Caco-2 (cell line): ENCODE measurements at regions of chr10 and their contacts with region 1.

Region 1: GRCh38 chr10:13299437-13300287 is at the start of gene PHYH:
- DNase-seq: peak; percentile 89 to 95
- H3K4me3 ChIP-seq: peak within 1 kb of the TSS; percentile 88
- H3K4me3 Mint-ChIP-seq: peak within 1 kb of the TSS; percentile 77
- H3K27ac Mint-ChIP-seq: peak within 1 kb of the TSS; percentile 100
- H3K4me1 ChIP-seq: peaks cover 14% of the 10 kb centered on the region; the same call in 1 of the 2 replicates
- H3K4me1 Mint-ChIP-seq: peaks cover 21% of the 10 kb centered on the region
- H3K27me3 ChIP-seq: no peaks in the 10 kb centered on the region
- H3K27me3 Mint-ChIP-seq: no peaks in the 10 kb centered on the region
- CTCF ChIP-seq: no peak
- total RNA-seq, gene PHYH: 49.6 and 52.3 TPM in 2 replicates

Region 2: GRCh38 chr10:13160934-13161856 is 138.5 kb before region 1 on chr10 and contains the start of gene MCM10:
- CTCF ChIA-PET with region 1: interaction called, 13 read pairs
- POLR2A ChIA-PET with region 1: interaction called, 7 read pairs
- intact Hi-C with region 1: loop called (anchors 1 kb)
- DNase-seq: peak; percentile 100
- H3K4me3 ChIP-seq: peak within 1 kb of the TSS; percentile 74
- H3K4me3 Mint-ChIP-seq: peak within 1 kb of the TSS; percentile 78
- H3K27ac Mint-ChIP-seq: peak within 1 kb of the TSS; percentile 61
- H3K4me1 ChIP-seq: peaks cover 4% of the 10 kb centered on the region; the same call in 1 of the 2 replicates
- H3K4me1 Mint-ChIP-seq: peaks cover 16% of the 10 kb centered on the region
- H3K27me3 ChIP-seq: no peaks in the 10 kb centered on the region
- H3K27me3 Mint-ChIP-seq: no peaks in the 10 kb centered on the region
- CTCF ChIP-seq: peak; percentile 91 to 92
- total RNA-seq, gene MCM10: 55.0 and 62.6 TPM in 2 replicates

Region 3: DNA sequence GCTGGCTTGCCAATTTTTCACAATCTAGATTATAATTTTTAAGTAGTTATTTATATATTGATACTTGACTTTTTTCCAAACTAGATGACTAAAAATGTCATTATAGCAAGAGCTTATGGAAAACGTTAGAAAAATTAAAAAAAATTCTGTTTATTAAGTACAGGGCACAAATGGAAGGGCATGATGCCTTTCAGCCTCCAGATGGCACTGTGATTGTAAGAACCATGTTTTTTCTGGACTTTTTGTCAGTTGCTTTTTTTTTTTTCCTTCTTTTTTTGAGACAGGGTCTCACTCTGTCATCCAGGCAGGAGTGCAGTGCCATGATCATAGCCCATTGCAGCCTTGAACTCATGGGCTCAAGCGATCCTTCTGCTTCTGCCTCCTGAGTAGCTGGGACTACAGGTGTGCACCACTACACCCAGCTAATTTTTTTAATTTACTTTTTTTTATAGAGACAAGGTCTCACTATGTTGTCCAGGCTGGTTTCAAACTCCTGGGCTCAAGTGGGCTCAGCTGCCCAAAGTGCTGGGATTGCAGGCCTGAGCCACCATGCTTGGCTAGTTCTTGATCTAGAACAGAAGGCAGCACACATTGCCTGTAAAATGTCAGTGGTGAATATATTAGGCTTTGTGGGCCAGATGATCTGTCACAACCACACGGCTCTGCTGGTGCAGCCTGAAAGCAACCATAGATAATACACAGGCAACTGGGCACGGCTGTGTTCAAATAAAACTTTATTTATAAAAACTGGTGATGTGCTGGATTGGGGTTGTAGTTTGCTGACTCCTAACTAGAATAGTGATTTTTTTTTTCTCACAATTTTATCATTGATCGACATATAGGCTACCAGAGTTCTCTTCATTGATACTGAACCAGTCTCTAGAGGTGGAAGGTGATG is 92.9 kb before region 1 on chr10:
- CTCF ChIA-PET with region 1: interaction called, 7 read pairs
- POLR2A ChIA-PET with region 1: interaction called, 3 read pairs
- intact Hi-C with region 1: loop called (anchors 1 kb)
- DNase-seq: peak in 1 of 2 experiments; percentile 25
- H3K4me3 ChIP-seq: no peak overlapping the region
- H3K4me3 Mint-ChIP-seq: no peak overlapping the region
- H3K27ac Mint-ChIP-seq: no peak overlapping the region
- H3K4me1 ChIP-seq: no peaks in the 10 kb centered on the region
- H3K4me1 Mint-ChIP-seq: no peaks in the 10 kb centered on the region
- H3K27me3 ChIP-seq: no peaks in the 10 kb centered on the region
- H3K27me3 Mint-ChIP-seq: no peaks in the 10 kb centered on the region
- CTCF ChIP-seq: peak; percentile 49 to 56

Region 4: DNA sequence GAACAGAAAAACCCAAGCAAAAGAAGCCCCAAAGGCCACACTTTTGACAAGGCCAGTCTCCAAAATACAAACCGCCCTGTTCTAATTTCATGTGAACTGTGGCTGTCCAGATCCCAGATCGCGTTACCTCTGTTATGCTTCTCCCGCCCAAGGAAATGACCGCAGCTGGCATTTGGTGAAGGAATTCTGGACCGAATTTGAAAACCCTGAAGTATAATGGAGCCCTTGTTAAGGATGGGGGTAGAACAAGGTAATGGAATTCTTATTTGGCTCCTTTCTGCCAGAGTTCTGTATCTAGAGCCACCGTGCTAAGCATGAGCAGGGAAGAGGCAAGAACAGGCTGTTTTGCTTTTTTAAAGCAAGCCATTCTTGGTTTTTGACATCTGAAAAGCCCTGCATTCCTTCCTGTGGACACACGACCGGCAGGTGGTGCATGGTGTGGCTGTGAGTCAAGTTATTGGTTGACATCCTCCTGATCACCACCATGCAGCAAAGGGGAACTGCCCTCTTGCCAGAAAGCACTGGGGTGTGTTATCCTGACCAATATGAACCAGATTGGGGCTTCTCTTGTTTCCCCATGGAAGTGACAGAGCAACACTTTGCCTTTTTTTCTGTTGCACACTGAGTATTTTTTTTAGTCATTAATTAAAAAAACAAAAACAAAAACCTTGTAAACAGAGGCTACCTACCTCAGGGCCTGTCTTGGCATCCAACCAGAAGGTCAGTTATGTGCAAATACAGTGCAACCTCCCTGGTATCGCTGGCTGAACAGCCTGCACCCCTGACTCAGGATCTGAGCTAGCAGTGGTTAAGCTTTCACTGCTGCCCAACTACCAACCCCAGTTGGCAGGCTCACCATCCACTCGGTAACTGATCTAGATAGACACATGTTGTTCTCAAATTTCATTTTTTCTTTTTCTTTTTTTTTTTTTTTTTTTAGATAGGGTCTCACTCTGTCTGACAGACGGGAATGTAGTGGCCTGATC is 79.7 kb before region 1 on chr10:
- CTCF ChIA-PET with region 1: interaction called, 4 read pairs
- POLR2A ChIA-PET with region 1: interaction called, 5 read pairs
- intact Hi-C with region 1: loop called (anchors 1 kb)
- DNase-seq: peak; percentile 70 to 73
- H3K4me3 ChIP-seq: no peak overlapping the region
- H3K4me3 Mint-ChIP-seq: no peak overlapping the region
- H3K27ac Mint-ChIP-seq: no peak overlapping the region
- H3K4me1 ChIP-seq: no peaks in the 10 kb centered on the region
- H3K4me1 Mint-ChIP-seq: no peaks in the 10 kb centered on the region
- H3K27me3 ChIP-seq: no peaks in the 10 kb centered on the region
- H3K27me3 Mint-ChIP-seq: no peaks in the 10 kb centered on the region
- CTCF ChIP-seq: peak; percentile 60 to 81

Region 5: GRCh38 chr10:13271552-13272163 is 28.0 kb before region 1 on chr10:
- CTCF ChIA-PET with region 1: interaction called, 3 read pairs
- POLR2A ChIA-PET with region 1: interaction called, 3 read pairs
- intact Hi-C with region 1: loop called (anchors 1 kb)
- DNase-seq: peak; percentile 61 to 69
- H3K4me3 ChIP-seq: no peak overlapping the region
- H3K4me3 Mint-ChIP-seq: no peak overlapping the region
- H3K27ac Mint-ChIP-seq: no peak overlapping the region
- H3K4me1 ChIP-seq: no peaks in the 10 kb centered on the region; the same call in 1 of the 2 replicates
- H3K4me1 Mint-ChIP-seq: no peaks in the 10 kb centered on the region
- H3K27me3 ChIP-seq: no peaks in the 10 kb centered on the region
- H3K27me3 Mint-ChIP-seq: no peaks in the 10 kb centered on the region
- CTCF ChIP-seq: peak; percentile 59 to 68

Region 6: GRCh38 chr10:13347500-13348156 is 48.0 kb after region 1 on chr10:
- CTCF ChIA-PET with region 1: interaction called, 7 read pairs
- POLR2A ChIA-PET with region 1: interaction called, 3 read pairs
- intact Hi-C with region 1: loop called (anchors 2 kb)
- DNase-seq: peak; percentile 86 to 90
- H3K4me3 ChIP-seq: peak overlapping the region; percentile 39
- H3K4me3 Mint-ChIP-seq: peak overlapping the region; percentile 80
- H3K27ac Mint-ChIP-seq: peak overlapping the region; percentile 24
- H3K4me1 ChIP-seq: peaks cover 14% of the 10 kb centered on the region; the same call in 1 of the 2 replicates
- H3K4me1 Mint-ChIP-seq: peaks cover 17% of the 10 kb centered on the region
- H3K27me3 ChIP-seq: no peaks in the 10 kb centered on the region
- H3K27me3 Mint-ChIP-seq: peaks cover 2% of the 10 kb centered on the region
- CTCF ChIP-seq: no peak

Region 7: DNA sequence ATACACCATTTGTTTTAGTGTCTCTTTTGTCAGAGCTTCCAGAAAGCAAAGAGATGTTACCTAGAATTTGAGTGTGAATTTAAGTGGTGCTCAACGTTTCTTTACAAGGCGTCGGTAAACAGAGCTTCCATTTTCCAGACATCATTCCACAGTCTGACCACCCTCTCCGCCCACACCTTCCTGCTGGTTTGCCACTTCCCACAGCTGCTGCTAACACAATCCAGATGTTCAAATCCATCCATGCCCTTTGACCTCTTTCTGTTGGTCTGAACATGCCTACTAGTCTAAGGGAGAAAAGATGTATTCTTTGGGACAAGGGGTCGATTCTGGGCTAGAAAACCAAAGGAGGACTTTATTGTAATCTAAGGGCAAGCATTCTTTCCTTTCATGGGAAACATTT is 1388.9 kb after region 1 on chr10:
- CTCF ChIA-PET with region 1: no interaction called
- POLR2A ChIA-PET with region 1: no interaction called
- intact Hi-C with region 1: no loop called
- DNase-seq: no peak
- H3K4me3 ChIP-seq: no peak overlapping the region
- H3K4me3 Mint-ChIP-seq: no peak overlapping the region
- H3K27ac Mint-ChIP-seq: peak overlapping the region; percentile 17
- H3K4me1 ChIP-seq: peaks cover 33% of the 10 kb centered on the region
- H3K4me1 Mint-ChIP-seq: peaks cover 33% of the 10 kb centered on the region
- H3K27me3 ChIP-seq: no peaks in the 10 kb centered on the region
- H3K27me3 Mint-ChIP-seq: no peaks in the 10 kb centered on the region
- CTCF ChIP-seq: no peak